ENCODE measurements at regions of chr19 and their contacts with region 1.

Region 1: DNA sequence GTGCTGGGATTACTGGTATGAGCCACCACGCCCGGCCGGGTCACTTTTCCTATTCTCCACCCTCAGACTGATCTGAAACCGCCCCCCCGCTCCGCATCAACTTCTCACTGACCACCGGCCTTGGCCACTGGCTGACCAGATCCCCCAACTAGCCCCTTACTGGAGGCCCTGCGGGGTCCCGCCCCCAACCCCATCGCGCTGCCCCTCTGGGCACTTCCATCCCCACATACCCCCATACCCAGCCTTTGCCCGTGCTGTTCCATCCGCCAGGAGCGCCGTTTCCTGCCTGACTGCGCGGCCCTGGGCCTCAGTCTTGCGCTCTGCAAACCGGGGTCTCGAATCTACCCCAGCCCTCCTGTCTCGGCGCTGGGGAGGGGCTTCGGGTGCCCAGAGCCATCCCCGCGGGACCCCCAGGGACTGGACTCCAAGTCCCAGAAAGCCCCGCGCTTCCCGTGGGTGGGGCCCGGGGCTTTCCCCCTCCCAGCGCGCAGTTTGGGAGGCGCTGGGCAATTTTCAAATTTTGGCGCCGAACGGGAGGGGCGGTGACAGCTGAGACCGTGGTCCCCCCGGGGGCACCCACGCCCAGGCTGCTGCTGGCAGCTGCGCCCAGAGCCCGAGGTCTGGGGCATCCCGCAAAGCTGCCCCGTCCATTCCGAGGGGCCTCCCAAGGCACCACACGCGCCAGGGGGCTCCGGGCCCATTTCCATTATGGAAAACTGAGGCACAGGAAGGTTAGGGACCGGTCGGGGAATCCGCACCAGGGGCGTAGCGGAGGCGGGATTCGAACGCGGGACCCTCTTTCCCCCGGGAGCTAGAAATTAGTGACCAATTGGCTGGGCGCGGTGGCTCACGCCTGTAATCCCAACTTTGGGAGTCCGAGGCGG is 5.2 kb upstream of the LMNB2 start:
- DNase-seq: peak; percentile 59
- H3K4me3 ChIP-seq: peak overlapping the region; percentile 69 to 78 (median 74)
- H3K27ac ChIP-seq: peak overlapping the region; percentile 60
- H3K4me1 ChIP-seq: peaks cover 15% of the 10 kb centered on the region
- H3K27me3 ChIP-seq: no peaks in the 10 kb centered on the region
- CTCF ChIP-seq: peak in 1 of 2 donors; percentile 39

Region 2: GRCh38 chr19:2164020-2164998 is 297.7 kb before region 1 on chr19:
- CTCF ChIA-PET with region 1: interaction called, 10 read pairs
- dilution Hi-C with region 1: no loop called
- in situ Hi-C with region 1: no loop called
- intact Hi-C with region 1: no loop called
- DNase-seq: peak; percentile 31
- H3K4me3 ChIP-seq: peak overlapping the region; percentile 82 to 95 (median 94)
- H3K27ac ChIP-seq: peak overlapping the region; percentile 62
- H3K4me1 ChIP-seq: peaks cover 25% of the 10 kb centered on the region
- H3K27me3 ChIP-seq: no peaks in the 10 kb centered on the region
- CTCF ChIP-seq: no peak

Region 3: DNA sequence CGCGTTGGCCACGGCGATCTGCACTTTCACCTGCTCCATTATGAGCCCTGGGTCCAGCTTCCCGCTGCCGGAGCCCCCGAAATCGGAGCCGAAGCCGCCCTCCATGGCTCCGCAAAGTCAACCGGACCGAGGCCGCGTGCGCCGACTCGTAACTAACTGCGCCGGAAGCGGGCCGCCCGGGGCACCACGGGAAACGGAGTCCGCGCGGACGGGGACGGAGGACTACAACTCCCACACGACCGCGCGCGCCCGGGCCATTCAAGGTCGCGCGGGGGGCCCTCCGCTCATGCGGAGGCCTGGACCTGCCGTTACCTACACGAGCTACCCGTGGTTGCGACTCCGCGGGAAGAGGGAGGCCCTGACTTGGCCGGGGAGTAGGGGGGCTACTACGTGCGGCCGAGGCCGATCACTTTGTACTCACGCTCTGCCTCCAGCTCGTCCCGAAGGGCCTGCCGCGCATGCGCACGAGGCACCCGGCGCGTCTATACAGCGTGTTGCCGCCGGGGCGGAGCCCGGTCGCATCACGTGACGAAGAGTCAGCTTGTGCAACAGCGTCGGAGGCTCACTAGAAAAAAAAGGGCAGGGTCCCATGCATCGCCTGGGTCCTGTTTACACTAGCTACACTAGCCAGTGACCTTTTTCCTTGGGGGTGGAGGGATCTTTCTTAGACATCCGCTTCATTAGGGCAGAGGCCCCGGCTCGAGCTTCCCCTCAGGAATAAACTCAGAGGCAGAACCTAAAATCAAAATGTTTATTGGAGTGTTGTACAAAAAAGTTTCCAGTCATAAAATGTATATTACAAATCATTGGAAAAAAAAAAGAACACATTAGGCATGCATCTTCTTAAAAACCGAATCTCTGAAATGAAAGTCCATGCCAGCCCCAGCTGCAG is 34.3 kb before region 1 on chr19 and contains the start of gene TIMM13:
- CTCF ChIA-PET with region 1: no interaction called
- dilution Hi-C with region 1: no loop called
- in situ Hi-C with region 1: no loop called
- intact Hi-C with region 1: loop called (anchors 2 kb)
- DNase-seq: peak; percentile 92
- H3K4me3 ChIP-seq: peak within 1 kb of the TSS; percentile 53 to 99 (median 77)
- H3K27ac ChIP-seq: peak within 1 kb of the TSS; percentile 74
- H3K4me1 ChIP-seq: peaks cover 23% of the 10 kb centered on the region
- H3K27me3 ChIP-seq: no peaks in the 10 kb centered on the region
- CTCF ChIP-seq: no peak
- total RNA-seq, gene TIMM13: 20.8 to 133 TPM

Region 4: DNA sequence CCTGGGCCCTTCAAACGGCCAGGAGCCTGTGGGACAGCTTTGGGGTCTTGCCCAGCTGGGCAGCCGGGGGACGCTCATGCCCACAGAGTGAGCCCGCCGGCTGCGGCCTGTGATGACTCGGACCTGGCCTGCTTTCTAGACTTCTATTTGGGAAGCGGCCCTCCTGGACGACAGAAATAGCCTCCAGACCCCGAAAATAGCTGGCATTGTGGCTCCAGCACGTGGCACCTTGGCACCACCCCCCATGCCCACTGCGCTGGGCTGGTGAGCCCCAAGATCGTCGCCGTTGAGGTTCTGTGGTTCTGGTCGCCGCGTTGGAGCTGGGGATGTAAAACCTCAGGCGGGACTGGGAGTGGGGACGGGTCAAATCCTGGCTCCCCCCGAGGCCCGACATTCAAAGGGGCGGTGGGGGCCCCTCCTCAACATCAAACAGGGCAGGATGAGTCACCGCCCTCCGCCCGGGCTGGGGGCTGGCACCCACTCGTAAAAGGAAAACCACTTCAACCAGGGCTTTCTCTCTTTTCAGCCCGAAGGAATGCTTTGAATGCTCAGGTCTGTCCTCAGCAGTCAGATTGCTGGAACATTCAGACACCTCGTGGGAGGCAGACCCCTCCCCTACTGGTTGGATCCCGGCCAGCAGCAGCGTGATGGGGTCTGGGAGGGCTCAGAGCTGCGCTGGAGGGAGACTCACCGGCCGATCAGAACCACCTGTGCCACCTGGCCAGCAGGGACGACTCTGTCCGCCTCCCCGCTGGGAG is 56.1 kb after region 1 on chr19:
- CTCF ChIA-PET with region 1: no interaction called
- dilution Hi-C with region 1: no loop called
- in situ Hi-C with region 1: no loop called
- intact Hi-C with region 1: no loop called
- DNase-seq: no peak
- H3K4me3 ChIP-seq: no peak overlapping the region
- H3K27ac ChIP-seq: no peak overlapping the region
- H3K4me1 ChIP-seq: no peaks in the 10 kb centered on the region
- H3K27me3 ChIP-seq: no peaks in the 10 kb centered on the region
- CTCF ChIP-seq: no peak

Measured in mammary epithelial cell (primary cell).